Heart left ventricle (tissue), 16 donors: ENCODE measurements at regions of chr15 and their contacts with region 1.

Region 1: DNA sequence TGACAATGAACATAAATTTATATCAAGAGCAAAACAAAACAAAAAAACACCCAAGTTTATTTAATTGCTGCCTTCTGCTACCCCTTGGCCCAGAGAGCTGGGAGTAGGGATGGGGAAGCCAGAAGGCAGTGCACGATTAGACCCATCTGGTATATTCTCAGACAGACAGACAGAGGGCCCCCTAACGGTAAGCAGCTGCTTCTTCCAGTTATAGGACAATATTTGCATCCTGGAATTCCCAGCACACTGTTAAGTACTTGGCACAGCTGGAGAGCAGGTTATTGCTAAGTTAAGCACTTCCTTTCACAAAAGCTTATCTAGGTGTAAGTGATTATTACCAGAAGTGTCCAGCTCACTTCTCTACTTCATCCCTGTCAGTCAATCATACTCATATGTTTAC is 39.3 kb downstream of the C2CD4B start:
- DNase-seq: peak in 2 of 5 donors; percentile 29 to 32
- ATAC-seq: peak in 3 of 4 donors; percentile 59 to 72 (median 65)
- H3K4me3 ChIP-seq: no peak overlapping the region
- H3K27ac ChIP-seq: peak overlapping the region in 1 of 12 donors; percentile 53
- H3K4me1 ChIP-seq: peaks cover 0 to 39% (median 1%) of the 10 kb centered on the region in 12 donors
- H3K27me3 ChIP-seq: no peaks in the 10 kb centered on the region
- CTCF ChIP-seq: peak; percentile 40 to 62 (median 48)
- POLR2A ChIP-seq: no peak

Region 2: GRCh38 chr15:62071711-62072308 is 54.0 kb before region 1 on chr15:
- intact Hi-C with region 1: no loop called
- DNase-seq: no peak
- ATAC-seq: no peak
- H3K4me3 ChIP-seq: no peak overlapping the region
- H3K27ac ChIP-seq: no peak overlapping the region
- H3K4me1 ChIP-seq: peaks cover 0 to 20% (median 7%) of the 10 kb centered on the region in 12 donors
- H3K27me3 ChIP-seq: peaks cover 0 to 9% (median 0%) of the 10 kb centered on the region in 9 donors
- CTCF ChIP-seq: peak; percentile 59 to 79 (median 72)
- POLR2A ChIP-seq: no peak

Region 3: GRCh38 chr15:62165104-62165792 is 39.5 kb after region 1 on chr15 and contains the start of gene C2CD4B:
- intact Hi-C with region 1: loop called in 2 of 10 experiments (anchors 5 kb)
- DNase-seq: peak; percentile 71 to 86 (median 79)
- ATAC-seq: peak; percentile 90 to 97 (median 92)
- H3K4me3 ChIP-seq: peak within 1 kb of the TSS; percentile 41 to 73 (median 57)
- H3K27ac ChIP-seq: peak within 1 kb of the TSS; percentile 61 to 83 (median 78)
- H3K4me1 ChIP-seq: peaks cover 0 to 23% (median 8%) of the 10 kb centered on the region in 12 donors
- H3K27me3 ChIP-seq: peaks cover 0 to 51% (median 28%) of the 10 kb centered on the region in 9 donors
- CTCF ChIP-seq: no peak
- POLR2A ChIP-seq: peak in 1 of 2 donors; percentile 90
- total RNA-seq, gene C2CD4B: 0.65 to 8.4 (median 2.3) TPM